ENCODE measurements at regions of chr21 and their contacts with region 1.

Region 1: DNA sequence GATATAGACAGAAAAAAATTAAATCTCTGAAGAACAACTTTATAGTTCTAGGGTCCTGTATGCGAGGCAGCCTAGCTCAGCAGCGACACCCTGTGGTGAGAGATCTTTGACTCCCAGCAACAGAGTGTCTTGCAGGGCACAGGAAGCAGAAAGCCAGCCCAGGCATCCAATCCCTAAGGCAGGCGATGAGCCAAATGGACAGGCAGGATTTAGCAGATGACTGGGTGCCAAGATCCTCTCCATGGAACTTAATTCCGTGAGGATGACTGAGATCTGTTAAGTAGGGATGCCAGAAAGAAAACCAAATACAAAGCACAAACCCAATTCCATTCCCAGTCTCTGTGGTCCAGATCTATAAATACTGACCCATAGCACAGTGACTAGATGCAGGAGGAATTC is 38.8 kb downstream of the HLCS start:
- DNase-seq: peak; percentile 87
- H3K4me3 ChIP-seq: no peak overlapping the region
- H3K27ac ChIP-seq: peak overlapping the region in 1 of 4 donors; percentile 5
- H3K4me1 ChIP-seq: peaks cover 0 to 11% (median 6%) of the 10 kb centered on the region in 4 donors
- H3K27me3 ChIP-seq: no peaks in the 10 kb centered on the region
- CTCF ChIP-seq: peak; percentile 89 to 94 (median 90)
- EP300 ChIP-seq: no peak
- POLR2A ChIP-seq: no peak

Region 2: GRCh38 chr21:36504067-36505058 is 423.4 kb before region 1 on chr21:
- in situ Hi-C with region 1: loop called in 3 of 4 experiments (anchors 10 to 25 kb)
- intact Hi-C with region 1: loop called (anchors 5 kb)
- DNase-seq: peak; percentile 18
- H3K4me3 ChIP-seq: no peak overlapping the region
- H3K27ac ChIP-seq: no peak overlapping the region
- H3K4me1 ChIP-seq: peaks cover 0 to 14% (median 11%) of the 10 kb centered on the region in 4 donors
- H3K27me3 ChIP-seq: peaks cover 4% of the 10 kb centered on the region
- CTCF ChIP-seq: peak; percentile 85 to 97 (median 93)
- EP300 ChIP-seq: no peak
- POLR2A ChIP-seq: no peak

Region 3: GRCh38 chr21:36630485-36631206 is 297.1 kb before region 1 on chr21:
- in situ Hi-C with region 1: loop called in 3 of 4 experiments (anchors 10 kb)
- intact Hi-C with region 1: no loop called
- DNase-seq: peak; percentile 66
- H3K4me3 ChIP-seq: no peak overlapping the region
- H3K27ac ChIP-seq: no peak overlapping the region
- H3K4me1 ChIP-seq: no peaks in the 10 kb centered on the region
- H3K27me3 ChIP-seq: peaks cover 88% of the 10 kb centered on the region
- CTCF ChIP-seq: peak; percentile 62 to 77 (median 68)
- EP300 ChIP-seq: no peak
- POLR2A ChIP-seq: no peak

Region 4: DNA sequence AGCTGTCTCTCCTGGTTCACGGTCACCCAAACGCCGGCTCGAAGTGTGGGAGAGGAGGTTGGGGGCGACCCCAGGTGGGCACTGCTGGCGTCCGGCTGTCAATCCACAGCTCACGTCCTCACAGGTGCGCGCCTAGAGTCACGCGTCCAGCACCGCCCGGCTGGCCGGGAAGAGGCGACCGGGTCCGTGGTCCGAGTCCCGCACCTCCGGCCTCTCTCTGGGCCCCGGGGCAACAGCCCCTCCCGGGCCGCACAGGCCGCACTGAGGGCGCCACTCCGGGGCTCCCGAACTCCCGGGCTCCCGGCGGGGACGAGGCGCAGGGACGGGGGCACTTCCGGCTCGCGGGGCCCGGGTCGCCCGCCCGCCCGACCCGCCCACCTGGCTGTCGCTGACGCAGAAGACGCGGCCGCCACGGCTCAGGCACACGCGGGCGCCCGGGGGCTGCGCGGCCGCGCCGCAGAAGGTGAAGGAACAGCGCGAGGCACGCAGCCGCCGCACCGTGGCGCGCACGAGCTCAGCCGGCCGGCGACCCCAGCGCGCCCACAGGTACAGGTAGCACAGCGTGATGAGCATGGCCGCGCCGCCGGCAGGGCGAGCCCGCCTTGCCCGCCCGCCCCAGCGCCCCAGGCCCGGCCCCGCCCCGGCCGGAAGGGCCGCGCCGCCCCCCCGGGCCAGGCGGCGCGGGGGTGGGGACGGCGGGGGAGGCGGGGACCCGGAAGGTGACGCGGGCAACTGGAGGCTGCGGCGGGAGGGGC is 38.5 kb after region 1 on chr21 and contains the start of gene HLCS:
- in situ Hi-C with region 1: no loop called
- intact Hi-C with region 1: no loop called
- DNase-seq: peak; percentile 85
- H3K4me3 ChIP-seq: peak within 1 kb of the TSS; percentile 70 to 86 (median 78)
- H3K27ac ChIP-seq: peak within 1 kb of the TSS; percentile 84 to 93 (median 87)
- H3K4me1 ChIP-seq: peaks cover 0 to 19% (median 6%) of the 10 kb centered on the region in 4 donors
- H3K27me3 ChIP-seq: no peaks in the 10 kb centered on the region
- CTCF ChIP-seq: peak in 1 of 5 experiments; percentile 23
- EP300 ChIP-seq: no peak
- POLR2A ChIP-seq: peak; percentile 38
- total RNA-seq, gene HLCS: 20.0 to 75.4 (median 32.8) TPM

Region 5: GRCh38 chr21:38205940-38206339 is 1278.2 kb after region 1 on chr21:
- in situ Hi-C with region 1: no loop called
- intact Hi-C with region 1: no loop called
- DNase-seq: no peak
- H3K4me3 ChIP-seq: no peak overlapping the region
- H3K27ac ChIP-seq: no peak overlapping the region
- H3K4me1 ChIP-seq: no peaks in the 10 kb centered on the region
- H3K27me3 ChIP-seq: peaks cover 49% of the 10 kb centered on the region
- CTCF ChIP-seq: no peak
- EP300 ChIP-seq: no peak
- POLR2A ChIP-seq: no peak